Testis (tissue), 5 donors: ENCODE measurements at regions of chr19 and their contacts with region 1.

Region 1: DNA sequence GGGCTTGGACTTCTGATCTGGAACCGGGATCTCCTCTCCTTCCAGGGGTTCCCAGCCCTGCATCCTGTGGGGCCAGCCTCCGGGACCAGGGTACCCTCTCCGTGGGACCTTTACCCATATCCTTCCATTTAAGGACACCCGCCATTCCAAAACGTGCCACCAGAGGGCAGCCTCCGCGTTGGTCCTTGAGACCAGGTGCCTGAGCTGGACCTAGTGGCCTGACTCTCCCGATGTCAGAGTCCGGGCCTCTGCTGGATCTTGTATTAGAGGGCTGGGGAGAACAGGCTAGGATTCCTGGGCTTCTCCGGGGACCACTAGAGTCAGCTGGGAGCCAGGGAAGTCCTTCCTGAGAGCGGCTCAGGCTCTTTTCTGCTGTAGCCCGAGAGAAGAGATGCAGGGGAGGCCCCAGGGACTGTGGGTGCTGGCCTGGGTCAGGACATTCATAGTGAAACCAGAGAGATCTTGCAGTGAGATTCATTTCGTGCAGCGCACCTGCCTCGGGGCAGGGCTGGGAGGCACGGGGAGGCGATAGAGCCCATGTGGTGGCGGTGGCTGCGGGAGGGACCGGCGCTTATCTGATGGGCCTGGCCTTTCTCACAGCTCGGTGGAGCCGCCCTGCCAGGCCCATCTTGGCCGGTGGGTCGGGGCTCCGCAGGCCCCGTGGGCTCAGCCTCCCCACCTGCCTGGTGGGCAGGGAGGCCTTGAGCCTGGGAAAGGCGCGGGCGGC is 9.8 kb upstream of the SLC7A10 start:
- DNase-seq: peak; percentile 93
- H3K4me3 ChIP-seq: no peak overlapping the region
- H3K27ac ChIP-seq: no peak overlapping the region
- H3K4me1 ChIP-seq: no peaks in the 10 kb centered on the region
- H3K27me3 ChIP-seq: no peaks in the 10 kb centered on the region
- CTCF ChIP-seq: peak; percentile 76 to 87 (median 82)
- POLR2A ChIP-seq: no peak

Region 2: DNA sequence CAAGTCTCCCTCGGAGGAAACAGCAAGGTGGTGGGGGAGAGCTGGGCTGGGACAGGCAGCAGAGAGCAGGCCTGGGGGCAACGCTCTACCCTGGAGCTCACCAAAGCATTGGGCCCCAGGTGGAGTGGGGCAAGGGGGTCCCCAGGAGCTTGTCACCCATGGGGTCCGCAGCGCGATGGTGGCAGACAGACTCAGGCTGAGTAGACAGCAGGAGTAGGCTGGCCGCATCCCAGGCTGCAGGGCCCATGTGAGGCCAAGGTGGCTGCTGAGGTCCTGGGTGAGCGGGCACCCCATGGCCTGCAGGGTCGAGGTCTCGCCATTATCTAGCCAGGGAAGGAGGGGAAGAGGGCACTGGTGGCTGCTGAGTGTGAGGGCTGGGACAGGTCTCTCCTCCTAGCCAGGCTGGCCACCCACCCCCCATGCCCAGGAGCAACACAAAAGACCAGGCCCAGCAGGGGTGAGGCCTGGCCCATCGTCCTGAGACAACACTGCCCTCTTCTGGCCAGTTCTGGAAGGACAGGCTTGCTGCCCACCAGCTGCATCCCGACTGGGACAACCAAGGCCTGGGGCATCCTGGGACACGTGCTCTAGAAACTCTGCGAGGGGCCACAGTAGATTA is 171.2 kb after region 1 on chr19:
- intact Hi-C with region 1: loop called (anchors 5 kb)
- DNase-seq: peak; percentile 79
- H3K4me3 ChIP-seq: no peak overlapping the region
- H3K27ac ChIP-seq: no peak overlapping the region
- H3K4me1 ChIP-seq: no peaks in the 10 kb centered on the region
- H3K27me3 ChIP-seq: no peaks in the 10 kb centered on the region
- CTCF ChIP-seq: peak; percentile 87 to 93 (median 92)
- POLR2A ChIP-seq: no peak